ENCODE measurements at regions of chr4 and their contacts with region 1.

Region 1: DNA sequence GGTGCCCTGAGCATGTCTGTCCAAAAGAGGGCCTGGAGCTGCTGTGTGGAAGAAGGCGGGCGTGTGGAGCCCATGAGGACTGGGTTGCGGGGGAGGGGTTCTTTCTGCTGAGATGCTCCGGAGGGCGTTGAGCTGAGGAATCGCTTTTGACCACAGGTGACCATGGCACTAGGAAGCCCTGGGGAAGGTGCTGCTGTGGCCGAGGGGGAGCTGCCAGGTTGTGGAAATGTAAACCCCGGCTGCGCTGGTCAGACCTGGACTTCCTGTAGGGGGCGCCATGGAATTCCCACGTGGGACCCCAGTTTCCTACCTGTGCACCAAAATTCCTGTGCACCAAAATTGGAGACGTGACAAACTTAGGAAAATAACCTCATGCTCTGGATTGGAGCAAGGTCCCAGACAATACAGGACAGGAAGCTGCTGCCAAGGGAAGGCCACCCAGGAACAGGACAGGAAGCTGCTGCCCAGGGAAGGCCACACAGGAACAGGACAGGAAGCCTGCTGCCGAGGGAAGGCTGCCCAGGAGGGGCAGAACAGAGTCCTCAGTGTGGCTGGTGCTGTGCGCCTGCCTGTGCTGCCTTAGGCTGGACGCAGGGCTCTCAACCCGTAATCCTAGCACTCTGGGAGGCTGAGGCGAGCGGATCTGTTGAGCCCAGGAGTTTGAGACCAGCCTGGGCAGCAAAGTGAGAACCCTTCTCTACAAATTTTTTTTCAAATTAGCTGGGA is 28.4 kb upstream of the UVSSA start:
- DNase-seq: peak in 1 of 2 experiments; percentile 83
- H3K4me3 ChIP-seq: no peak overlapping the region
- H3K27ac ChIP-seq: no peak overlapping the region
- H3K4me1 ChIP-seq: no peaks in the 10 kb centered on the region
- H3K27me3 ChIP-seq: no peaks in the 10 kb centered on the region
- CTCF ChIP-seq: peak in 2 of 3 experiments; percentile 65 to 73; a peak in 3 of 4 replicates
- EP300 ChIP-seq: no peak
- POLR2A ChIP-seq: no peak
- RAD21 ChIP-seq: peak; percentile 17 to 39; a peak in 2 of 4 replicates

Region 2: DNA sequence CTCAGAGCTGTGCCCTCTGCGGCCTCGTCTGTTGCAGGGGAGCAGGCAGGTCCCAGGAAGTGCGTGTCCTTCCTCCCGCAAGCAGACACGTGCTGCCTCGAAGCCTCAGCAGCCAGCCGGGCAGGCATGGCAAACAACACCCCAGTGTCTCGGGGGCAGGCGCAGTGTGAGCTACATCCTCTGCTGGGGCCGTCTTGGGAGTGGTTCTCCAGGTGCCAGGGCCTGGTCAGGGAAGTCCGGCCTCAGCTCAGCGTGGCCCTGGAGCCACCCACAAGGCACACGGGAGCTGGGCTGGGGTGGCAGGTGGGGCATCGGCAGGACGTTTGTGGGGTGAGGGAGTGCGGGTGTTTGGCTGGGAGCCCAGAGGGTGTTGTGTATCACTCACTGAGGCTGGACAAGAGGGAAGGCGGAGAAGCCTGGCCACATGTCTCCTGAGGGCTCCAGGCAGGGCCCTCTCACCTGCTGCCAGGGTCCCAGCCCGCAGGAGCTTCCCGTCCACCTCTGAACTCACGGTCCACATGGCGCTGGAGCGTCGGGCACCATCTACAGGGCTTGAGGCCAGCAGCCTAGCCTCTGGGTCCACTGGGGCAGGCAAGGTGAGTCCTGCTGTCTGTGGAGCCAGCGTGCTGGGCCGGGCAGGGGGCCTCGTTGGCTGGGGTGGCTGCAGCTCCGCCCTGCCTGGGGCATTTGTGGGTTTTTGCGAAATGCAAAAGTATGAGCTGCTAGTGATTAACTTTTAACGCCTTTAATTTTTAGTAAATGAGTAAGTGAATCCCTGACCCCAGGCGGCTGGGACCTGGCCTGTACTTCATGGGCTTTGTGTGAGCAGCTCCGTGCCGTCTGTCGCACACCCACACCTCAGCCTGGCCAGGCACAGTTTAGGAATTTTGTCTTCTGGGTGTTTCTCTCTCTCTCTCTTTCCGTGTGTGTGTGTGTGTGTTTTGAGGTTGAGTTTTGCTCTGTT is 11.0 kb after region 1 on chr4:
- CTCF ChIA-PET with region 1: interaction called, 10 read pairs
- POLR2A ChIA-PET with region 1: interaction called, 6 read pairs
- DNase-seq: no peak
- H3K4me3 ChIP-seq: no peak overlapping the region
- H3K27ac ChIP-seq: no peak overlapping the region
- H3K4me1 ChIP-seq: no peaks in the 10 kb centered on the region
- H3K27me3 ChIP-seq: no peaks in the 10 kb centered on the region
- CTCF ChIP-seq: no peak
- EP300 ChIP-seq: no peak
- POLR2A ChIP-seq: no peak
- RAD21 ChIP-seq: no peak